CD4-positive, alpha-beta memory T cell (primary cell): ENCODE measurements at regions of chrX and their contacts with region 1.

Region 1: GRCh38 chrX:47482512-47483309 is at the start of gene ZNF41:
- DNase-seq: peak; percentile 78 to 86 (median 83)
- H3K4me3 ChIP-seq: peak within 1 kb of the TSS; percentile 70 to 88
- H3K4me3 Mint-ChIP-seq: peak within 1 kb of the TSS; percentile 82 to 95 (median 90)
- H3K27ac ChIP-seq: peak within 1 kb of the TSS; percentile 77
- H3K27ac Mint-ChIP-seq: peak within 1 kb of the TSS; percentile 85 to 99 (median 97)
- H3K4me1 ChIP-seq: peaks cover 29% of the 10 kb centered on the region
- H3K4me1 Mint-ChIP-seq: peaks cover 12 to 41% (median 24%) of the 10 kb centered on the region in 4 donors
- H3K27me3 ChIP-seq: no peaks in the 10 kb centered on the region
- H3K27me3 Mint-ChIP-seq: no peaks in the 10 kb centered on the region
- total RNA-seq, gene ZNF41: 16.1 TPM

Region 2: DNA sequence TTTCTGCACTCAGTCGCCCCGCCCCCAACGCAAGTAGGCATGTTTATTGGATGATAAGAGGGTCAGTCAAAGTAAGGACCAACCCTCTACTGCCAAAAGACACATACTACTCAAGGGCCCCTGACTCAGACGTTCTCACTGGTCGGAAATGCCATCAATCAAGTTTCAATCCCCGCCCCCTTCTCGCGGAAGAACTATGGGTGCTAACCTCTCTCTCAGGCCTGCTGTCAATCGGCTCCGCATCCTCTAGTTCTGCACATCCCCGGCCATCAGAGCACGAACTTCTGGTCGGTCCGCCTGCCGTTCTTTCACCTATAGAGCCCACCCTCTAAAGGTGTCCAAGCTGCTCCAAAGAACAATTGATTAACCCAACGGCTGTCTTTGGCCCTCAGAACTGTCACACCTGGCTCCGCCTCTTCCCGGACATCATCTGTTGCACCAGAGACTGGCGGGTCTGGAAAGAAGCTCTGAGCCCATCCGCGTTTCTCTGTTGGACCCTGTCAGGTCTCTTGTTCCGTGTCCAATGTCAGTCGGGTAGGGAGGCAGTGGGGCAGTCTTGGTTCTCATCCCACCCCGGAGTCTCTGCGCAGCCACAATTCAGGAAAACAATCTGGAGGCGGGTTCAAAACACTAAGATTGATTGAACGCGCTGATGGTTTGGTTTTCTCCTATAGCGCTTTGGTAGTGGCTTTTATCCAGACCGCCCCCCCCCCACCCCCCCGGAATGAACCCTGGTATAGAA is 353.4 kb before region 1 on chrX:
- CTCF ChIA-PET with region 1: no interaction called
- POLR2A ChIA-PET with region 1: no interaction called
- intact Hi-C with region 1: loop called (anchors 5 kb)
- DNase-seq: peak; percentile 91 to 93 (median 92)
- H3K4me3 ChIP-seq: peak overlapping the region; percentile 61 to 73
- H3K4me3 Mint-ChIP-seq: peak overlapping the region; percentile 92 to 99 (median 96)
- H3K27ac ChIP-seq: peak overlapping the region; percentile 64
- H3K27ac Mint-ChIP-seq: peak overlapping the region; percentile 95 to 98 (median 97)
- H3K4me1 ChIP-seq: no peaks in the 10 kb centered on the region
- H3K4me1 Mint-ChIP-seq: peaks cover 0 to 11% (median under 1%) of the 10 kb centered on the region in 4 donors
- H3K27me3 ChIP-seq: no peaks in the 10 kb centered on the region
- H3K27me3 Mint-ChIP-seq: no peaks in the 10 kb centered on the region

Region 3: DNA sequence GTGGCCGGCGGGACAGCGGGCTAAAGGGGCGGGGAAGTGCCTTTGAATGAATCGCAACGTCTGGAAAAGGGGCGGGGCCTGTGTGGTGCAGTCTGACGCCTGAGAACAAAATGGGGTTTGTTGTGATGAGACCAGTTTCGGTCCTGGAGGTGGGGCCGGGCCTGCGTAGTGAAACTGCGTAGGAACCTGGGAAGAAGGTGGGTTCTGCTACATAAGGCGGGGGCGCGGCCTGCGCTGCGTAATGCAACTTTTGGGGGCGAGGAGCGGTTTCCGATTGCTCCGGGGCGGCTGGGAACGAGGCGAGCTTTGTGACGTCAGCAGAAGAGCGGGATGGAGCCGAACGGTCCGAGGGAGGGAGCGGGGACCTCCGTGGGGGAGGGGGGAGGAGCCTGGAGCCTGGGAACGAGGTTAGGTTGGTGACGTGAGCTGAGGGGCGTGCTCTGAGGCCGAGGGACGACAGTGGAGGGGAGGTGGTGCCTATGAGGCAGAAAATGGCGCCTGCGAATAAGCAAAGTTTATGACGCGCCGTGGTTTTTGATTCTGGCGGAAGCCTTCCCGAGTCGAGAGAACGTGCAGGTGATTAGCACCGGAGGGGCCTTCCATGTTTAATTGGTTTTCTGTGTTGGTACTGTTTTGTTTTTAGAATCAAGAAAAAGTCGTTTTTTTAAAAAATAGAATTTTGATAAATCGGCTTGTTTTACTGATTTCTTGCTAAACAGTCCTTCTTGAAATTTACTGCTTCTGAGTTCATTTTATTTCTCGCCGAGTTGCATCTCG is 249.2 kb before region 1 on chrX:
- CTCF ChIA-PET with region 1: no interaction called
- POLR2A ChIA-PET with region 1: interaction called, 3 read pairs
- intact Hi-C with region 1: loop called (anchors 2 kb)
- DNase-seq: peak; percentile 95 to 98 (median 96)
- H3K4me3 ChIP-seq: peak overlapping the region in 1 of 2 donors; percentile 60
- H3K4me3 Mint-ChIP-seq: peak overlapping the region; percentile 86 to 96 (median 91)
- H3K27ac ChIP-seq: peak overlapping the region; percentile 97
- H3K27ac Mint-ChIP-seq: peak overlapping the region; percentile 93 to 100 (median 98)
- H3K4me1 ChIP-seq: peaks cover 31% of the 10 kb centered on the region
- H3K4me1 Mint-ChIP-seq: peaks cover 11 to 34% (median 25%) of the 10 kb centered on the region in 4 donors
- H3K27me3 ChIP-seq: no peaks in the 10 kb centered on the region
- H3K27me3 Mint-ChIP-seq: no peaks in the 10 kb centered on the region

Region 4: DNA sequence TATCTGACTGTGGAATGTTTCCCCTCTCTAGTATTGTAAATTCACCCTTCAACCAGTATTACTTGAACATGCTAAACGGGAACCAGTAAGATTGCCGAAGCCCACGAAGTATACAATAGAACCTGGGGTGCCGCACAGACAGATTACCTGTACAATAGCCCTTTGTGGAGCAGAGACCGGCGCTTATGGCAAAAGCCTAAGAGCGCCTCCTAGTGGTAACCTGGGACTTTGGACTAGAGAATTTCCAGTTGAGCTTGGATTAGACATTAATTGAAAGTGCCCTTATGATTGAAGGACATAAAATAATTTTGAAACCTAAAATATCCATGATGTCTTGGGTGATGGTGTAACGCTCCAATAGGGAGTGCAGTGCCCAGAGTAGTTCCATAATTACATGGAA is 98.2 kb before region 1 on chrX:
- CTCF ChIA-PET with region 1: no interaction called
- POLR2A ChIA-PET with region 1: no interaction called
- intact Hi-C with region 1: loop called (anchors 2 kb)
- DNase-seq: peak; percentile 71 to 80 (median 77)
- H3K4me3 ChIP-seq: no peak overlapping the region
- H3K4me3 Mint-ChIP-seq: peak overlapping the region in 1 of 8 donors; percentile 43
- H3K27ac ChIP-seq: no peak overlapping the region
- H3K27ac Mint-ChIP-seq: peak overlapping the region in 2 of 7 donors; percentile 14 to 70
- H3K4me1 ChIP-seq: peaks cover 18% of the 10 kb centered on the region
- H3K4me1 Mint-ChIP-seq: peaks cover 9 to 20% (median 13%) of the 10 kb centered on the region in 4 donors
- H3K27me3 ChIP-seq: no peaks in the 10 kb centered on the region
- H3K27me3 Mint-ChIP-seq: no peaks in the 10 kb centered on the region

Region 5: DNA sequence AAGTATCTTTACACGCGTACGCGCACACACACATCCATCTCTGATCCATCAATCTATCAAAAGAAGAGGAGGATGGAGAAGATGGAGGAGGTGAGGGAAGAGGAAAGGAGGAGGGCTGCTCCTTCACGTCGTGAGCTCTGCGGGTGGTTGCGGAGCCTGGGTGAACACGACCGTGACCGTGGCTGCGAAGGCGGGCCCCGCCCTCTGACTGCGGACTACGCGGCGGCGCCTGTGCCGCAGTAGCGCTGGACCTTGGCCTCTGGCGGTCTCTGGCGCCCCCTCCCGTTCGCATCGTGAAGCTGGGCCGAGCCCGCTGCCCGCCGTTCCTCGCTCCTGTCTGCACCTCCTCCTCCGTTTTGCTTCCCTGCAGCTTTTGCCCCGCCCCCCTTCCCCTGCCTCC is 40.6 kb after region 1 on chrX:
- CTCF ChIA-PET with region 1: interaction called, 5 read pairs
- POLR2A ChIA-PET with region 1: no interaction called
- intact Hi-C with region 1: loop called (anchors 5 kb)
- DNase-seq: peak; percentile 65 to 75 (median 70)
- H3K4me3 ChIP-seq: peak overlapping the region in 1 of 2 donors; percentile 32
- H3K4me3 Mint-ChIP-seq: peak overlapping the region; percentile 66 to 76 (median 74)
- H3K27ac ChIP-seq: no peak overlapping the region
- H3K27ac Mint-ChIP-seq: peak overlapping the region in 3 of 7 donors; percentile 17 to 25 (median 19)
- H3K4me1 ChIP-seq: peaks cover 5% of the 10 kb centered on the region
- H3K4me1 Mint-ChIP-seq: peaks cover 0 to 4% (median under 1%) of the 10 kb centered on the region in 4 donors
- H3K27me3 ChIP-seq: no peaks in the 10 kb centered on the region
- H3K27me3 Mint-ChIP-seq: no peaks in the 10 kb centered on the region

Region 6: GRCh38 chrX:47650164-47651042 is 167.7 kb after region 1 on chrX and contains the start of gene ELK1:
- CTCF ChIA-PET with region 1: no interaction called
- POLR2A ChIA-PET with region 1: interaction called, 3 read pairs
- intact Hi-C with region 1: loop called (anchors 2 kb)
- DNase-seq: peak; percentile 85 to 95 (median 90)
- H3K4me3 ChIP-seq: peak within 1 kb of the TSS in 1 of 2 donors; percentile 69
- H3K4me3 Mint-ChIP-seq: peak within 1 kb of the TSS; percentile 85 to 94 (median 88)
- H3K27ac ChIP-seq: peak within 1 kb of the TSS; percentile 74
- H3K27ac Mint-ChIP-seq: peak within 1 kb of the TSS; percentile 87 to 97 (median 97)
- H3K4me1 ChIP-seq: peaks cover 33% of the 10 kb centered on the region
- H3K4me1 Mint-ChIP-seq: peaks cover 31 to 42% (median 36%) of the 10 kb centered on the region in 4 donors
- H3K27me3 ChIP-seq: no peaks in the 10 kb centered on the region
- H3K27me3 Mint-ChIP-seq: no peaks in the 10 kb centered on the region
- total RNA-seq, gene ELK1: 36.4 to 38.3 TPM